ENCODE measurements at regions of chr22 and their contacts with region 1.

Region 1: DNA sequence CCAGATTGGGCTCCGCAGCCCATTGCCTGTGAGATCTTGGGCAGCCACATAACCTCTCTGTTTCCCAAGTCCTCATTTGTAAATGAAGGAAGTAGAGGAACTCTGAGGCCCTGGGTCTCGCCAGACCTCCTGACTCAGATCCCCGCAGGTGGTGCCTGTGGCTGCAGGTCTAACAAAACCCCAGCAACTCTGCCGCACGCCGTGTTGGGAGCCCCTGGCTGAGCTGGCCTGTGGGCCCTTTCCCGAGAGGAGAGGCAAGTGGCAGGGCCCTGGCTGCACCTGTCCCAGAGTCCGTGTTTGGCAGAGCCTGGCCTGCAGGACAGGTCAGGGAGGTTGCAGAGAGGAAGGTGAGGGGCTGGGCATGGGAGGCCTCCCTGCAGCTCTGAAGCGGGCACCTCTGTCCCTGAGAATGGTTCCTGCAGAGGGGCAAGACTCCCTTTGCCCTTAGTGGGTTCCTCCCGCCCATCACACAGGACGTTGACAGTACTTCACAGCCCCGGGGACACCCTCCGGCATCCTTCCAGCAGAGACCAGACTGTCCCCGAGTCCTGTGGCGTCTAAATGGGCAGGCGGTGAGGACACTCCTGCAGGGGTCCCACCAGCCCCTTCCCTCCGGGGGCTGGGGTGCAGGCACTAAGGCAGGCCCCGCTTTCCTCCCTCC is 67.7 kb downstream of the ARHGAP8 start:
- DNase-seq: no peak
- ATAC-seq: no peak
- H3K4me3 ChIP-seq: no peak overlapping the region
- H3K4me3 Mint-ChIP-seq: no peak overlapping the region
- H3K27ac ChIP-seq: no peak overlapping the region
- H3K27ac Mint-ChIP-seq: no peak overlapping the region
- H3K4me1 ChIP-seq: no peaks in the 10 kb centered on the region
- H3K4me1 Mint-ChIP-seq: peaks cover 0 to 5% (median 0%) of the 10 kb centered on the region in 7 donors
- H3K27me3 ChIP-seq: no peaks in the 10 kb centered on the region
- H3K27me3 Mint-ChIP-seq: peaks cover 0 to 12% (median 0%) of the 10 kb centered on the region in 5 donors

Region 2: DNA sequence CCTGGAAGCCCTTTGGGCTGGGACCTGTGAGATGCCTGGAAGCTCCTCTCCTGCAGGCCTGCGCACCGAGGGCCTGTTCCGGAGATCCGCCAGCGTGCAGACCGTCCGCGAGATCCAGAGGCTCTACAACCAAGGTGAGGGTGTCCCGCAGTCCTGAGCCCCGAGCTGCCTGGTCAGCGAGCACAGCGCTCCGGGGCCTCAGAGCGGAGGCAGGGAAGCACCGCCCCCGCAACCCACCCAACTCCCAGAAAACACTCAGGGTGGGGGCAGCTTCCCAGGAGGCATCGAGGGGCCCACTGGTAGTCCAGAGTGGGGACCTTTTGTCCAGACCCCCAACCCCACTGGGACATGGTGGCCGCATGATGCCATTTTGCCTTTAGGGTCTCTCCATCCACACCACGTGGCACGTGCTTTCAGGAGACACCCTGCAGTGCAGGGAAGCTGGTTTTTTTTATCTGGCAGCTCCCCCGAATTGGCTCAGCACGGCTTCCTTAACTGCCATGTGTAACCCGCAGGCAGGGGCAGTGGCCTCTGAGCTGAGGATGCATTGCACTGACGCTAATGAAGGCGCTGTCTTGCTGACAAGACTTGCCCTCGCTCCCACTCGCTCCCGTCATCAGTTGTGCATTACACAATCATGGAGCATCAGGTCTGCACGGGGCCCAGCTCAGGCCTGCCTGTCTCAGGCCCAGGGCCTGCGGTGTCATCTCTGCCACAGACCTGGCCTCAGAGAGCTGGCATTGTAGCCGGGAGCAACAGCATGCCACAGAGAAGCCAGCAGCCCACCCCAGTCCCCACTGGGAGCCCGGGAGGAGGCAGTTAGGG is 28.0 kb after region 1 on chr22:
- CTCF ChIA-PET with region 1: no interaction called
- POLR2A ChIA-PET with region 1: no interaction called
- intact Hi-C with region 1: no loop called
- DNase-seq: no peak
- ATAC-seq: no peak
- H3K4me3 ChIP-seq: no peak overlapping the region
- H3K4me3 Mint-ChIP-seq: no peak overlapping the region
- H3K27ac ChIP-seq: no peak overlapping the region
- H3K27ac Mint-ChIP-seq: no peak overlapping the region
- H3K4me1 ChIP-seq: no peaks in the 10 kb centered on the region
- H3K4me1 Mint-ChIP-seq: no peaks in the 10 kb centered on the region
- H3K27me3 ChIP-seq: no peaks in the 10 kb centered on the region
- H3K27me3 Mint-ChIP-seq: peaks cover 0 to 5% (median 0%) of the 10 kb centered on the region in 5 donors

Region 3: DNA sequence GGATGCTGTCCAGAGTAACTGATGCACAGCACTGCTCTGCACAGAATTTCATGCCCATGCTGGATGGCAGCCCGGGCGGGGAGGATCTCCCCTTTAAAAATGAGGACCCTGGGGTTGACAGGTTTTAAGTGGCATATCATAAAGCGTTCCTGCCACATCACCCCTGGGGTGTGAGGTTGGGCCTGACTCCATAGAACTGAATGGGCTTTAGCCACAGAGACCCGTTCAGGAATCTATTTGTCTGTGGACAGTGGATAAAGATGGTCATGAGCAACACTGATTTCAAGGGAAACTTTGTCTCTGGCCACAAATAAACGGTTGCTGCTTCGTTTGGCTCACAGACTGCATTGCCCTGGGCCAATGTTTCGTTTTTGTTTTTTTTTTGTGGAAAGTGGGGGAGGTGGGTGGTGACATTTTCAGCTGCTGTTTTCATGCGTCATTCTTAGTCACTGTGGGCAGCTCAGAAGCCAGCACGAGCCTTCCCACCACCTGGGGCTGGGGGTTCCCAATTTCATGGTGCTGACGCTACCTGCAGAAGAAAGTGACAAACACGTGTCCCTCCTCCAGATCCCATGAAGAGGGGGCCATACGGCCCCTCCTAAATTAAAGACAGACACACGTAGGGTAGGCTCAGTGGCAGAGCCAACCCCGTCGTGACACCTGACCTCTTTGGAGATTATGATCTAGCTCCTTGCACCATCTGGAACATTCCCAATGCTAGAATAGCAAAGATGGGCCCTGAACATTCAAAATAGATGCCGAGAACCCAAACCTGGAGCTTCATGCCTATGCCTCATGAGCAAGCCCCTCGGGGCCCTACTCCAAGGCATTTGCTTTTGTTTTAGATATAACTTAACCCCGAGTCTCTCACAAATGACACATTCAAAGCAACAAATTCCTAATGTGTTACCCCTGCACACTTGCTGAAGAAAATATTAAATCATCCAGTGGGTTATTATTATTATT is 244.5 kb after region 1 on chr22:
- CTCF ChIA-PET with region 1: no interaction called
- POLR2A ChIA-PET with region 1: no interaction called
- intact Hi-C with region 1: no loop called
- DNase-seq: peak in 2 of 9 donors; percentile 17 to 67
- ATAC-seq: peak; percentile 26
- H3K4me3 ChIP-seq: no peak overlapping the region
- H3K4me3 Mint-ChIP-seq: peak overlapping the region in 1 of 10 donors; percentile 17
- H3K27ac ChIP-seq: no peak overlapping the region
- H3K27ac Mint-ChIP-seq: peak overlapping the region in 2 of 9 donors; percentile 19 to 59
- H3K4me1 ChIP-seq: no peaks in the 10 kb centered on the region
- H3K4me1 Mint-ChIP-seq: peaks cover 0 to 7% (median 0%) of the 10 kb centered on the region in 7 donors
- H3K27me3 ChIP-seq: no peaks in the 10 kb centered on the region
- H3K27me3 Mint-ChIP-seq: peaks cover 0 to 14% (median 0%) of the 10 kb centered on the region in 5 donors

Region 4: DNA sequence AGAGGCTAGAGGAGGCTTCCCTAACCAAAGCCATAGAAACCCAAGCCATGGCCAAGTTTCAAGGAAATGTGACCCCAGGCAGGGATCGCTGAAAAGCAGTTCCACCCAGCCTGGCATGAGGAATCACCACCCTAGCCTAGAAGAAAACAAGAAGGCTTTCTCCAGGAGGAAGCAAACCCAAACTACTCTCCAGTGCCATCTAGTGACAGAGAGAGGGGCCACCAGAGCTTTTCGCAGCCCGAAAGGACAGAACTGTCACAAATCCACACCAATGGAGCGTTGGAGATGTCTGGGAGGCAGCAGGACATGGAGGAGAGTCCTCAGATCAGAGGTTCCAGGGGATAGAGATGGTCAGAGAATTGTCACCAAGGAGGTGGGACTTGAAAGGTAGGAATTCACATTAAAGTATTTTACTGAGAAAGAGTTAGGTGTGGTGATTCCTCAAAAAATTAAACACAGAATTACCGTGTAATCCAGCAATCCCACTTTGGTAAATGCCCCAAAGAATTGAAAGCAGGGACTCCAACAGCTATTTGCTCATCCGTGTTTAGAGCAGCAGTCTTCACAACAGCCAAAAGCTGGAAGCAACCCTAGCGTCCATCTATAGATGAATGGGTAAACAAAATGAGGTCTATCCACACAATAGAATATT is 276.3 kb after region 1 on chr22:
- CTCF ChIA-PET with region 1: no interaction called
- POLR2A ChIA-PET with region 1: no interaction called
- intact Hi-C with region 1: loop called in 1 of 2 experiments (anchors 1 kb)
- DNase-seq: peak in 7 of 9 donors; percentile 15 to 42 (median 24)
- ATAC-seq: peak; percentile 68
- H3K4me3 ChIP-seq: no peak overlapping the region
- H3K4me3 Mint-ChIP-seq: no peak overlapping the region
- H3K27ac ChIP-seq: no peak overlapping the region
- H3K27ac Mint-ChIP-seq: peak overlapping the region in 2 of 9 donors; percentile 20 to 32
- H3K4me1 ChIP-seq: no peaks in the 10 kb centered on the region
- H3K4me1 Mint-ChIP-seq: peaks cover 0 to 4% (median 2%) of the 10 kb centered on the region in 7 donors
- H3K27me3 ChIP-seq: peaks cover 0 to 9% of the 10 kb centered on the region in 2 donors
- H3K27me3 Mint-ChIP-seq: peaks cover 3 to 36% (median 24%) of the 10 kb centered on the region in 5 donors

Region 5: DNA sequence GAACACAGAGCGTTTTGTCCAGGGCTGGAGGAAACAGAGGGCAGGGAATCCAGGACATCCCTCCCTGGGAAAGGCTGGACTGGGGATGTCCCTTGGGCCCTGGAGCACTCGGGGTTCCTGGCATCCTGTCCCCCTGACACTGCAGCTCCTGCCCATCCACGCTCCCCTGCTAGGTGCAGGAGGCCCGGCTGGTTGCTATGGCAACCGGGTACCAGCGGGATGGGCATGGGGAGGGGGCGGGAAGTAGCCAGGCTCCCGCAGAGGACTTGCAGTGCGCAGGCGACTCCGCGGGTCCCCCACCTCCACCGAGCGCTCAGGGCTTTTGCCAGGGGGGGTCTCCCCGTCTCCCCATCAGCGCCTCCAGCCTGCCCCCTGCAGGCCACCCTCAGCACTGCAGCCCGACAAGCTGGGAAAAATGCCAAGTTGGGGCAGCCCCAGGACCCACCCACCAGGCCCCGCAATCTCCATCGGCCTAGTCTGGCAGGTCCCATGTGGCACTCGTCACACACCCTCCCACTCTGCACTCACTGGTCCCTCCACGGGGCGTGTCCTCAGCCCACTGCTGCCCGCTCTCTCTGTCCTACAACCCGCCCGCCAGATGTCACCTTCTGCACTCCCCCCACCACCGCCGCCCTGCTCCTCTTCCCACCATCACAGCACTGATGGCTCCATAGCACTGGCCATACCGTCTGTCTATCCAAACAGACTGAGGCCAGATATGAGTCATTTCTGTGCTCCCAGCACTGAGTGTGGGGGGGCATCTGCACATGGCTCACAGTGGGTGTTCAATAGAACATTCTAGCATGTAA is 389.1 kb after region 1 on chr22:
- CTCF ChIA-PET with region 1: no interaction called
- POLR2A ChIA-PET with region 1: no interaction called
- intact Hi-C with region 1: loop called in 1 of 2 experiments (anchors 5 kb)
- DNase-seq: peak in 5 of 9 donors; percentile 17 to 49 (median 36)
- ATAC-seq: peak; percentile 62
- H3K4me3 ChIP-seq: no peak overlapping the region
- H3K4me3 Mint-ChIP-seq: no peak overlapping the region
- H3K27ac ChIP-seq: no peak overlapping the region
- H3K27ac Mint-ChIP-seq: peak overlapping the region in 2 of 9 donors; percentile 62 to 74
- H3K4me1 ChIP-seq: no peaks in the 10 kb centered on the region
- H3K4me1 Mint-ChIP-seq: peaks cover 0 to 9% (median 0%) of the 10 kb centered on the region in 7 donors
- H3K27me3 ChIP-seq: no peaks in the 10 kb centered on the region
- H3K27me3 Mint-ChIP-seq: no peaks in the 10 kb centered on the region